ENCODE measurements at regions of chr14 and their contacts with region 1.

Region 1: DNA sequence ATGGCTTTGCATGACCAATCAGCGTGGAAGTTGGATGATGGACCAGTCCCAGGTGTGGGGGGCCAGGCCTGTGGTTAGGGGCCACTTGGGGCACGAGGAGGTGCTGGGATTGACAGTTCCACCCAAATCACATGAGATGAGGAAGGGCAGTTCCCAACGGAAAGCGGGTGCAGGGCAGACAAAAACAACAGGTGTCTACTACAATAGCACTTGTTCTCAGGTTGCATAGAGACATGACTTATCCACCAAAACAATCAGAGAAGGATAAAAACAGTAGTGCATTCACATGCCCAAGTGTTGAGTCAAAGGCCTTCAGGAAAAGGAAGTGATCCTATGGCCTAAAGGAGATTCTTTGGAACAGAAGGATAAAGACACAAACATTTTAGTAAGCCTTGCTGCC is 14.6 kb upstream of the EIF2B2 start:
- DNase-seq: peak; percentile 94 to 100
- H3K4me3 ChIP-seq: no peak overlapping the region
- H3K27ac ChIP-seq: peak overlapping the region; percentile 38
- H3K4me1 ChIP-seq: peaks cover 43% of the 10 kb centered on the region
- H3K27me3 ChIP-seq: no peaks in the 10 kb centered on the region
- CTCF ChIP-seq: no peak; the same call in 1 of the 2 replicates

Region 2: GRCh38 chr14:74309125-74310022 is 678.8 kb before region 1 on chr14:
- CTCF ChIA-PET with region 1: interaction called, 10 read pairs
- POLR2A ChIA-PET with region 1: no interaction called
- intact Hi-C with region 1: no loop called
- DNase-seq: no peak
- H3K4me3 ChIP-seq: no peak overlapping the region
- H3K27ac ChIP-seq: no peak overlapping the region
- H3K4me1 ChIP-seq: 0 out of 2 replicates have a peak, but pooled peaks cover 5% of the 10 kb centered on the region
- H3K27me3 ChIP-seq: no peaks in the 10 kb centered on the region
- CTCF ChIP-seq: no peak

Region 3: GRCh38 chr14:74754157-74754556 is 234.0 kb before region 1 on chr14:
- CTCF ChIA-PET with region 1: no interaction called
- POLR2A ChIA-PET with region 1: no interaction called
- intact Hi-C with region 1: no loop called
- DNase-seq: no peak
- H3K4me3 ChIP-seq: no peak overlapping the region
- H3K27ac ChIP-seq: no peak overlapping the region
- H3K4me1 ChIP-seq: no peaks in the 10 kb centered on the region
- H3K27me3 ChIP-seq: no peaks in the 10 kb centered on the region
- CTCF ChIP-seq: no peak

Region 4: GRCh38 chr14:75050852-75051554 is 62.9 kb after region 1 on chr14 and contains the start of gene MLH3:
- CTCF ChIA-PET with region 1: no interaction called
- POLR2A ChIA-PET with region 1: no interaction called
- intact Hi-C with region 1: no loop called
- DNase-seq: peak; percentile 79 to 93
- H3K4me3 ChIP-seq: peak within 1 kb of the TSS; percentile 82
- H3K27ac ChIP-seq: peak within 1 kb of the TSS; percentile 61
- H3K4me1 ChIP-seq: peaks cover 15% of the 10 kb centered on the region
- H3K27me3 ChIP-seq: no peaks in the 10 kb centered on the region
- CTCF ChIP-seq: 0 out of 2 replicates have a peak, but pooled peaks have one; percentile 5
- total RNA-seq, gene MLH3: 47.6 and 48.7 TPM in 2 replicates